AG04449 (cell line): ENCODE measurements at regions of chr9 and their contacts with region 1.

Region 1: DNA sequence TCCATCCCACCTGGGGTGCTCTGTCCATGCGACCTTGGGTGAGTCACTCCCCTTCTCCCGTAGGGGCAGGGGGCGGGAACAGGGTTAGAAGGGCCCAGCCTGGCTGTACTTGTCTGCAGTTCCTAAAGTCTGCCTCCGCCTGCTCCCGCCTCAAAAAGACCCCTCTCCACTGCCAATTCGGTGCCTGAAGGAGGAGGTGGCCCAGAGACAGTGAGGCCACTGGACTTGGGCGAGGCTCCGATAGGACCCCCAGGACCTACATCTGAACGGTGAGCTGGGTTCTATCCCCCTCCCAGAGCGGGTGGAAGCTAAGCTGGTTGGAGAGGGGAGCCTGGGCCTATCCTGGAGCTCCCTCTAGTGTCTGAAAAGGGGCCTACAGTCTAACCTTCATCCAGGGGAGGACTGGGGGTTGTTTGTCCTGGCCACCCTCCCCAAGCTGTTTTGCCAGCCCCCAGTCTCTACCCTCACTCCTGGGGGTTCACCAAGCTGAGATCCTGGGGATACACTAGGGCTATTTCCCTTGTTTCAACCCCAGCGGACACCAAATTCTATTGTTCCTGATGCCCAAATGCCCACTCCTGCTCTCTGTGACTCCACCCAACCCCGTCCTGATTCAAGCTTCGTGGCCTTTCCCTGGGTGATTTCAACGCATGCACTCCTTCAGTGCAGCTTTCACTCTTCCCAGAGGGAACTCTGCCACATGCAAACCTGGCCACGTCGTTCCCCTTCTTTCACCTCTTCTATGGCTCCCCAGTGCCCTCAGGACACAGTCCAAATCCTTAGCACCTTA is 6.1 kb upstream of the CRB2 start:
- DNase-seq: no peak
- H3K4me3 ChIP-seq: no peak overlapping the region
- CTCF ChIP-seq: peak; percentile 94

Region 2: GRCh38 chr9:123091459-123091858 is 258.4 kb before region 1 on chr9:
- CTCF ChIA-PET with region 1: interaction called, 38 read pairs
- POLR2A ChIA-PET with region 1: no interaction called
- DNase-seq: no peak
- H3K4me3 ChIP-seq: no peak overlapping the region
- CTCF ChIP-seq: no peak

Region 3: DNA sequence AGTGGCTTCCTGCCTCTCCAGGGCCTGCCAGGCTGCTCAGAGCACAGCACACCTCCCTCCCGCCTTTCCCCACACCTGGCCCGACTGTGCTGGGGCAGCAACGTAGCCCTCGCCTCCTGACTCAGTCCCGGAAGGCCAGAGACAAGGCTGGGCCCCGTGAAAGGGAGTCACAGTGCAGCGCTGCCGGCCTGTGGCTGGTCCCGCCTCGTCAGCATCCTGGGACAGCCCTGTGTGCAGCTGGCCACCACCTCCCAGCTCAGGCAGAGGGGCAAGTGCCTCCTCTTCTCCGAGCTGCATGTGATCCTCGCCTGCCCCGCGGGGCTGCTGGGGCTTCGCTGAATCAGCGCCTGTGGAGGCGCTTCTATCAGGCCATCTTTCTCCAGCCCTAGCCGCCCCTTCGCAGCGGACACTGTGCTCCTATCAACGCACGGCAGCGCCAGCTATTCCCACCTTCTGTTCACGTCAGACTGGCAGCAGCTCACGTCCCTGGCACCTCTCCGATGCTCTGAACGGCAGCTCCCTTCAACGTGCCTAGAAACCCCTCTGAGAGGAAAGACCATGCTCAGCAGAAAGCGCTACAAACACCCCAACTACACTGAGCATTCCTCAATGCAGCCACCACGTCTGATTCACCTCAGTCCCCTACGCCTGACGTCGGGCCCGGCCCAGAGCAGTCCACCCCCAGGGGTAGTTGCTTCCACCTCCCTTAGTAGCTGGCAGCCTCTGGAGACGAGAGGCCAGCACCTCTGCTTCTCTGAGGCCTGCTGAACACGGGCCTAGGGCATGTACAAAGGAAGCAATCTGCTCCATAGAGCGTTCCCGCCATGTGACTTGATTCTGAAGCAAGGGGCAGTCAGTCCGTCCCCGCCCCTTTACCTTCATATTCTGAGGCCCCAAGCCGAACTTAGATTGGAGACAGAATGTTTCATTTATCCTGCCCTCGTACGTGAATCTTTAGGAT is 237.6 kb before region 1 on chr9:
- CTCF ChIA-PET with region 1: interaction called, 19 read pairs
- POLR2A ChIA-PET with region 1: no interaction called
- DNase-seq: no peak
- H3K4me3 ChIP-seq: no peak overlapping the region
- CTCF ChIP-seq: no peak

Region 4: GRCh38 chr9:123360161-123361085 is 10.5 kb after region 1 on chr9:
- CTCF ChIA-PET with region 1: interaction called, 63 read pairs
- POLR2A ChIA-PET with region 1: no interaction called
- DNase-seq: no peak
- H3K4me3 ChIP-seq: no peak overlapping the region
- CTCF ChIP-seq: no peak

Region 5: DNA sequence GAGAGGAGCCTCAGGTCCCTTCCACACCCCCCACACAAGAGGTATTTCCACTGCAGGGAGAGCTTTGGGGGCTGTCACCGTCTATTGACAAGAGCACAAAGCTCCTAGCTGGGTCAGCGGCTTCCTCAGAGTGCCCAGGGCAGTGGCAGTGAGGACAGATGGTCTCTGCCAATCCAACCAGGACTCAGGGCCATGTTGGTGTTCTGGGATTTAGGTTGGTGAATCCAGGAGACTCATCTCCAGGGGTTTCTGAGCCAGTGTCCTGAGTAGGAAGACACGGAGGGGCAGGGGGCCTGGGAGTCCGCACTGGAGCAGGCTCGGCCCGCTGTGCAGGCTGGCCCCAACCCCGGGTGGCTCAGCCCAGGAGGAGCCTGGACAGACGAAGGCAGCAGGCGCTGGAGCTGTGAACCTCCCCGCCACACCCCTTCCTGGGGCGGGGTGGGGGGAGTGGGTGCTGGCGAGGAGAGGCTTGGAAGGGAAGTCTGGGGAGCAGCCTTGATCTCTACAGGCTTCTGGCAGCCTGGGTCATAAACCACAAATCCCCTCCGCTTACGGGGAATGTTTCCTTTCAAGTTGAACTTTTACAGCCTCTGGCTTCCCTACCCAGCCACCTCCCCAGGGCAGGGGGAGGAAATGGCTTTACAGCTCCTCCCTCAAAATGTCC is 25.7 kb after region 1 on chr9:
- CTCF ChIA-PET with region 1: interaction called, 217 read pairs
- POLR2A ChIA-PET with region 1: no interaction called
- DNase-seq: no peak
- H3K4me3 ChIP-seq: no peak overlapping the region
- CTCF ChIP-seq: no peak

Region 6: DNA sequence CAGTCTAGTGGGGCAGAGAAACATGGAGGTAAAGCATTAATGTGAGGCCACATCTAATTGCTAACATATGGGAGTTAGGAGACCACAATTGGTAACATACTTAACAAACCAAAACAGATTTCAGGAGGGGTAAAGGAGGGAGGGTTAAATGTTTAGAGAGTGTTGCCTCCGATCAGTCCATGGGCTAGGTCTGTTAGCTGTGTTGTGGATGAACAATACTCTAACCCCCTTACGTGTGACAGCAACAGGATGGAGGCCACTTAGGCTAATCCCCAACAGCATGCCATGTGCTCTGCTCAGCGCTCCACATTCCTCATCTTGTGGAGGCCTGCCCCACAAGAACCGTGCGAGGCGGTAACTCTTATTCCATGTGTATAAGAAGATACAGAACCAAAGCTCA is 173.1 kb after region 1 on chr9:
- CTCF ChIA-PET with region 1: no interaction called
- POLR2A ChIA-PET with region 1: no interaction called
- DNase-seq: no peak
- H3K4me3 ChIP-seq: no peak overlapping the region
- CTCF ChIP-seq: no peak

Region 7: DNA sequence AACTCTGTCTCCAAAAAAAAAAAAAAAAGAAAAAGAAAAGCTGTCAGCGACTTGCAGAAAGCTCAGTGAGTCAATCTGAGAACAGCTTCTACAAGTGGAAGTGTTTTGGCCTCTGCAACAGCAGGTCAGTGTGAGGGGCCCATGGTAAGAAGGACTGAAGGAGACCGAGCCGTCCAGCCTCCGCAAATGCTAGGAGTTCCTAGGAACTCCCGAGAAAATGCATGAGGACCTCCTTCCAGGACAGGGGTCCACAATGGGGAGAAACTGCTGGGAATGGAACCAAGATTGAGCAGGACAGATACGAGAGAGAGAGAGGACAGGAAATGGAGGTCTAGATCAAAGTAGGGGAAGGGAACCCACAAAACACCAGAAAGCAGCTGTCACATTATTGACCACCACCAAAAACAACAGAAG is 186.6 kb after region 1 on chr9:
- CTCF ChIA-PET with region 1: no interaction called
- POLR2A ChIA-PET with region 1: no interaction called
- DNase-seq: no peak
- H3K4me3 ChIP-seq: no peak overlapping the region
- CTCF ChIP-seq: no peak

Region 8: DNA sequence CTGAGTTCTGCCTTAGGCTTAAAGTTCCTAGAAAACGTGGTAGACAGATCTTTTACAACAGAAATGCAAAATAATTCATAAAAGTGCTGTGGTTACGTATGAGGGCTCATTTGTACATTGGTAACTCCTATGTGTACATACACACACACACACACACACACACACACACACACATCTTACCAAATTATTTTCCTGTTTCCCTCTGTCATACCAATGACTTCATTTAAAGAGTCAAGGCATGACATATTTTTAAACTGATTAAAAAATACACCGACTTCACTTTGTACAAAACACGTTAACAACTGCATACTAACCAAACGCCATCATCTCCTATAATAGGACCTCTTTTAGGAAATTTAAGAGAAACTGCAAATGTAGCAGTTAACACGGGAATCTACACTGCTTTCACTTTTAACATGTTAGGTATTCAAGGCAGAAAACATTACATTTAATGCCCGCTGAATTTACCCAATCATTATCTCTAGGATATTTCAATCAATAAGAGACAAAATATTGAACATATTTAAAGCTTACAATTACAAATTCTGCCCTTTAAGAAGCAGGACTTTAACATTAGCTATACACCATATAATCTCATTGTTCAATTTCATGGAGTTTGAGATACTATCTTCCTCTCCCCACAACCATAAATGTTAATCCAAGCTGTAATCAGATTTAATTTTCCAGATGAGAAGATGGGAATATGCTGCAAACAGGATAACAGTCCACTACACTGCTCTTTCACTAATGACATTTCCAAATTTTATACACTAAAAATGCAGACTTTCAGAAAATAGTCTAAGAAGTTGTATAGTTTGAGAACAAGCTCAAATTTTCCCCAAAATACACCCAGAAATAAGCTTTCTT is 447.0 kb after region 1 on chr9:
- CTCF ChIA-PET with region 1: no interaction called
- POLR2A ChIA-PET with region 1: no interaction called
- DNase-seq: no peak
- H3K4me3 ChIP-seq: no peak overlapping the region
- CTCF ChIP-seq: no peak